IMR-90 (cell line): ENCODE measurements at regions of chr12 and their contacts with region 1.

Region 1: DNA sequence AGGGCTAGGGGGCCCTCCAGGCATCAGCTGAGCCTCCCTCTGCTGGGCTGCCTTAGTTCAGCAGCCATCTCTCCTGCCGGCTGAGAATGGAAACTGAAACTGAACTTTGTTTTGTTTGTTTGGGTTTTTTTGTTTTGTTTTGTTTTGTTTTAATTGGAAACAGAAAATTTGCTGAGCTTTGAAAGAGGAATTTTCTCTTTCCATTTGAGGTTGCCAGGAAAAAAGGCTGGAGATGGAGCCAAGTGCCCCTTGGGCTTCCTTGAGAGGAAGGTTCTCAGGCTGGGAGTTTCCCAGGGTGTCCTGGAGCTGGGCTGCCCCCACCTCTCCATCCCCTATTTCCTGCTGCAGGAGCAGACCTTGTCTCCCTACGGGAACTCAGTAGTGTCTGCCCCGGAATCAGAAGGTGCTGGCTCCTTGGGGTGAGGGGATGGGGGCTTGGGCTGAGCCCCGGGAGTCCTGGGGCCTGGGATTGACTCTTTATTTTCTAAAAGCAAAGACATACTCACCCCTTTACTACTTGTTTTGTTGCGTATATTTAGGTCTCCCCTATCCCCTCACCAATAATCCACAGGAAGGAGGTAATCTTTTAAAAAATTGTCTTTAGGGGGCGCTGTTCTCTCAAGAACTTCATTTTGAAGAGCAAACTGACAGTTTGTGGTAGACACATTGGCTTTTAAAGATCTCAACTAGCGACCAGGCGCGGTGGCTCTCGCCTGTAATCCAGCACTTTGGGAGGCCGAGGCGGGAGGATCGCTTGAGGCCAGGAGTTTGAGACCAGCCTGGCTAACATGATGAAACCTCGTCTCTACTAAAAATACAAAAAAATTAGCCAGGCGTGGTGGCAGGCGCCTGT is 21.3 kb upstream of the OASL start:
- DNase-seq: peak; percentile 33
- ATAC-seq: peak; percentile 95
- H3K4me3 ChIP-seq: peak overlapping the region; percentile 14; the same call in 1 of the 2 replicates
- H3K27ac ChIP-seq: no peak overlapping the region
- H3K4me1 ChIP-seq: no peaks in the 10 kb centered on the region
- H3K27me3 ChIP-seq: peaks cover 6% of the 10 kb centered on the region
- CTCF ChIP-seq: peak; percentile 45
- POLR2A ChIP-seq: no peak
- RAD21 ChIP-seq: peak; percentile 39

Region 2: GRCh38 chr12:121095544-121096198 is 35.3 kb after region 1 on chr12:
- CTCF ChIA-PET with region 1: no interaction called
- POLR2A ChIA-PET with region 1: no interaction called
- dilution Hi-C with region 1: no loop called
- in situ Hi-C with region 1: no loop called
- intact Hi-C with region 1: loop called (anchors 5 kb)
- DNase-seq: peak; percentile 35
- ATAC-seq: peak; percentile 99
- H3K4me3 ChIP-seq: peak overlapping the region; percentile 24; the same call in 1 of the 2 replicates
- H3K27ac ChIP-seq: no peak overlapping the region
- H3K4me1 ChIP-seq: peaks cover 2% of the 10 kb centered on the region; the same call in 1 of the 2 replicates
- H3K27me3 ChIP-seq: peaks cover 15% of the 10 kb centered on the region
- CTCF ChIP-seq: peak; percentile 74
- POLR2A ChIP-seq: no peak
- RAD21 ChIP-seq: peak; percentile 66

Region 3: GRCh38 chr12:121159467-121160307 is 99.3 kb after region 1 on chr12:
- CTCF ChIA-PET with region 1: no interaction called
- POLR2A ChIA-PET with region 1: no interaction called
- dilution Hi-C with region 1: no loop called
- in situ Hi-C with region 1: no loop called
- intact Hi-C with region 1: no loop called
- DNase-seq: no peak
- ATAC-seq: no peak
- H3K4me3 ChIP-seq: no peak overlapping the region
- H3K27ac ChIP-seq: no peak overlapping the region
- H3K4me1 ChIP-seq: no peaks in the 10 kb centered on the region
- H3K27me3 ChIP-seq: peaks cover 34% of the 10 kb centered on the region
- CTCF ChIP-seq: no peak
- POLR2A ChIP-seq: no peak
- RAD21 ChIP-seq: no peak

Region 4: GRCh38 chr12:121230538-121230907 is 170.1 kb after region 1 on chr12:
- CTCF ChIA-PET with region 1: no interaction called
- POLR2A ChIA-PET with region 1: no interaction called
- dilution Hi-C with region 1: no loop called
- in situ Hi-C with region 1: no loop called
- intact Hi-C with region 1: loop called (anchors 2 kb)
- DNase-seq: no peak
- ATAC-seq: no peak
- H3K4me3 ChIP-seq: no peak overlapping the region
- H3K27ac ChIP-seq: no peak overlapping the region
- H3K4me1 ChIP-seq: no peaks in the 10 kb centered on the region
- H3K27me3 ChIP-seq: no peaks in the 10 kb centered on the region
- CTCF ChIP-seq: no peak
- POLR2A ChIP-seq: no peak
- RAD21 ChIP-seq: no peak

Region 5: DNA sequence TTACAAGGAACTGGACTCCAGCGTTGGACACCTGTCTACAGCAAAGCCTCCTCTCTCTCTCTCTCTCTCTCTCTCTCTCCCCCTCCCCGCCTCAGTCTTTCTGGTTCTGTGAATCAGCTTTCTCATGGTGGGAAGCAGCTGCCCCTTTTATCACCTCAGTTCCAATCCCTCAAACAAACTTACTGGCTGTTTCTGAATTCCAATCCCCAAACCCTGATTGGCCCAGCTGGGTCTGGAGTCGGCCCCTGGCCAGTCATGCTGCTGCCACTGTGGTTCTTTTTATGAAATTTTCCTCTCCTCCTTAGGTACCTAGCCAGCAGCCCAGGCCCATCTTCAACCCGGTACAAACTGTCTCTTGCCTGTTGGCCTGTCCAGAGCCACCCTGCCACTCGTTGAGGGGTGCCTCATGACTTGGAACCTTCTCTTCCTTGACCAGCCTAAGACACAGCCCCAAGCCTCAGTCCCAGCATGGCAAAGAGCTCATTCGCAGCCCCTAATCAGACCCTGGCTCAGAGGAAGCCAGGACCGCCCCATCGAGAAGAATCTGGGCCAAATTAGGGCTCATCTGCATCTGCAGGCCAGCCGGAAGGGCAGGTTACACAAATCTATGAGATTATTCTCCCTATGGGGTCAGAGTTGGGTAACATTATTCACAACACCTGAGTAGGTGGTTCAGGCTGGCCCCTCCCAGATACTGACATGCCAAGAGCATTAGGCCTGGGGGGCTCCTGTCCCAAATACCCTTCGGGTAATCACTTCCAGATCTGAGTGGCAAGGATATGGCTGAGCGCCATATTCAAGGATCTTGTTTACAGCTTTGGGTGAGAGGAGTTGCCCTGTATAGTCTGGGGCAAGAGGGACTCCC is 618.6 kb after region 1 on chr12:
- CTCF ChIA-PET with region 1: no interaction called
- POLR2A ChIA-PET with region 1: no interaction called
- dilution Hi-C with region 1: no loop called
- in situ Hi-C with region 1: no loop called
- intact Hi-C with region 1: loop called (anchors 5 kb)
- DNase-seq: peak; percentile 50
- ATAC-seq: peak; percentile 65; the same call in 1 of the 2 replicates
- H3K4me3 ChIP-seq: no peak overlapping the region
- H3K27ac ChIP-seq: no peak overlapping the region
- H3K4me1 ChIP-seq: peaks cover 2% of the 10 kb centered on the region; the same call in 1 of the 2 replicates
- H3K27me3 ChIP-seq: no peaks in the 10 kb centered on the region
- CTCF ChIP-seq: no peak
- POLR2A ChIP-seq: no peak
- RAD21 ChIP-seq: no peak